ENCODE measurements at regions of chr13 and their contacts with region 1.

Region 1: DNA sequence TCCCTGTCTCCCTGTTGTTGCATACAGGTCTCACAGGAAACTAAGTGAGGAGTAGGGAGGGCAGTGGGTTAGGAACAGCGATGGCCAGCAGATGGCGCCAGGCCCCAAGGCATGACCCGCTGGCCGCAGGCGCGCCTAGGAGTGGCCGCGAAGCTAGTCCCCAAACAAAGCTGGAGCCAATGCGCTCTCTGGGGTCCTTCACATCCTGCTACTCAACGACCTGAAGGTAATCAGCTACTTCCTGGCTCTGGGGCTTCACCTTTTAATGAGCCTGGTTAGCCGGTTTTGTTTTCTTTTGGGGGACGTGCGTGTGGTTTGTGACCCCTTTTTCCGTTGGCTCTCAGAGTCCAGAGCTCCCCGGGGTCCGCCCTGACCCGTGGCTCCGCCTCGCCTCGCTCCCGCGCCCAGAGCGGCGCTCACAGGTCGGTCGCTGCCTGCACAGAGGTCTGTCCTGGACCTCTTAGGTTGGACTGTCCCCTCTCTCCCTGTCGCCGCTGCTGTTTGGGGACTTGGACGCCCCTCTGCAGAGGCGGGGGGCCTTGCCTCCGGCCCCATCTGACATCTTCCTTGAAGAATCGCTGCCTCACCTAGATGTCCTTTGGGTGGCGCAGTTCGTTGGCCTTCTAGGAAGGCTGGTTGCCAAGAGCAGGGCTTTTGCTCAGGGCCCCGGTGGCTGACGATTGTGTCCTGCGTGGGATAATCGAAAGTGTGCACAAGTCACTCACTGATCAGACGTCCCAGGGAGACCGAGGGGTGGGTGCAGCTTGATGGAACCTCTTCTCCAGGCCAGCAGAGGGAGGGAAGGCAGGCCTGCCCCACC is 62.1 kb upstream of the GTF3A start:
- DNase-seq: no peak
- ATAC-seq: peak; percentile 98
- H3K4me3 ChIP-seq: peak overlapping the region; percentile 29
- H3K27ac ChIP-seq: no peak overlapping the region
- H3K4me1 ChIP-seq: no peaks in the 10 kb centered on the region
- H3K27me3 ChIP-seq: peaks cover 3 to 4% of the 10 kb centered on the region in 2 experiments; a peak in 1 of 4 replicates
- CTCF ChIP-seq: peak; percentile 93 to 96 (median 95)
- EP300 ChIP-seq: no peak
- POLR2A ChIP-seq: no peak
- RAD21 ChIP-seq: peak; percentile 83

Region 2: DNA sequence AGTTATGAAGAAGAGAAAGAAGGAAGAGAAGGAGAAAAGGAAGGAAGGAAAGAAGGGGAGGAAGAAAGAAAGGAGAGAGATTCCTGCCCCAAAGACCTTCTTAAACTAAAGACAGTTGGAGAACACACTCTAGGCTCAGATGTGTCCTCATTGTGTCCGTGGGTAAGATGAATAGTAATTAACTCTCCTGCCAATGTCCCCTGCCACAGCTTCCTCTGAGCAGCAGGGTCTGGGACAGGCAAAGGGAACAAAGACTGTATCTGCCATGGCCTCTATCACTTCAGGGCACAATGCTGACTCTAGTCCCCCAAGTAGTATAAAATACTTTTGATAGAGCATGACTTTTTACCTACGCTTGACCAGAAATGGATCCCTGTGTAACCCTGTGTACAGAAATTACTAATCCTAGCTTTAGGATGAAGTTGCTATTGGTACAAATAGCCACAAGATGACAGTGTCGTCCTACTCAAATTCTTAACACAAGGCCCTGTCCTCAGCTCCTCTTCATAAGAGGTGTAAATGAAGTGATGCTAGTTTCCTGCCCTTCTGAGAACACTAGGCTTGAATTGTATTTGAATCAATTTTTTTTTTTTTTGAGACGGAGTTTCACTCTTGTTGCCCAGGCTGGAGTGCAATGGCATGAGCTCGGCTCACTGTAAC is 415.5 kb before region 1 on chr13:
- CTCF ChIA-PET with region 1: interaction called, 51 read pairs
- POLR2A ChIA-PET with region 1: no interaction called
- RAD21 ChIA-PET with region 1: interaction called, 42 read pairs
- SMC1A ChIA-PET with region 1: interaction called, 21 read pairs
- in situ Hi-C with region 1: no loop called
- intact Hi-C with region 1: loop called (anchors 1 kb)
- DNase-seq: peak; percentile 16
- ATAC-seq: peak; percentile 95
- H3K4me3 ChIP-seq: no peak overlapping the region
- H3K27ac ChIP-seq: no peak overlapping the region
- H3K4me1 ChIP-seq: no peaks in the 10 kb centered on the region
- H3K27me3 ChIP-seq: peaks cover 0 to 1% of the 10 kb centered on the region in 2 experiments; a peak in 1 of 4 replicates
- CTCF ChIP-seq: peak; percentile 68 to 86 (median 71)
- EP300 ChIP-seq: no peak
- POLR2A ChIP-seq: no peak
- RAD21 ChIP-seq: peak; percentile 82

Region 3: GRCh38 chr13:27171827-27172494 is 190.3 kb before region 1 on chr13:
- CTCF ChIA-PET with region 1: no interaction called
- POLR2A ChIA-PET with region 1: no interaction called
- RAD21 ChIA-PET with region 1: no interaction called
- SMC1A ChIA-PET with region 1: interaction called, 4 read pairs
- in situ Hi-C with region 1: no loop called
- intact Hi-C with region 1: loop called (anchors 10 kb)
- DNase-seq: no peak
- ATAC-seq: peak; percentile 87
- H3K4me3 ChIP-seq: peak overlapping the region; percentile 59
- H3K27ac ChIP-seq: peak overlapping the region; percentile 74
- H3K4me1 ChIP-seq: peaks cover 11% of the 10 kb centered on the region
- H3K27me3 ChIP-seq: no peaks in the 10 kb centered on the region
- CTCF ChIP-seq: peak in 2 of 3 experiments; percentile 7 to 19; a peak in 1 of 6 replicates
- EP300 ChIP-seq: peak in 1 of 2 experiments; percentile 26; a peak in 1 of 4 replicates
- POLR2A ChIP-seq: peak; percentile 7; the same call in 1 of the 2 replicates
- RAD21 ChIP-seq: peak; percentile 23; the same call in 1 of the 2 replicates

Region 4: DNA sequence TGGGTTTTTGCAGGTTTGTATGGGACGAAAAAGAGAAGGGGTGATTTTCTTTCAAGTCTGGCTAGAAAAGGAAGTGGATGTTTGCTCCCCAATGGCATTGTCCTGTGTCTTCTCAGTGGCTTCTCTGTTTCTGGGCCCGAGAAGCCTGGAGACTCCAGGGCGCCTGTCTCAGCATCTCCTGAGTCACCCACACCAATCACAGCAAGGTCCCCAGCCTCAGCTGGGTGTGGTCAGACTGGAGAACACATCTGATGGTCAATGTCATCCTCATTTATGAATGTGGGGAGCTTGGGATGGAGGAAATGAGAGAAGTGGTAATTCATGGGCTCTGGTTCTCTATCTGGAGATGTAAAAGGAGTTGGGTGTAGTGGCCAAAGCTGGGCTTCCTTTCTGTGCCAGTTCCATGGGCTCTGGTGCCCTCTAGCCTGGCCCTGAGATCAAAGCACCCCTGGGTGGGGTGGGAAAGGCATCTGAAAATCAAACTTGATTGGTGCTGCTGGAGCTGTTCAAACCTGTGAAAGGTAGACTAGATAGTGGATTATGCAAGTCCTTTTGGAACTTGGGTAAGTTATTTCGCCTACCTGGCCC is 78.3 kb before region 1 on chr13:
- CTCF ChIA-PET with region 1: interaction called, 6 read pairs
- POLR2A ChIA-PET with region 1: no interaction called
- RAD21 ChIA-PET with region 1: interaction called, 4 read pairs
- SMC1A ChIA-PET with region 1: no interaction called
- in situ Hi-C with region 1: no loop called
- intact Hi-C with region 1: loop called (anchors 2 kb)
- DNase-seq: no peak
- ATAC-seq: peak; percentile 92
- H3K4me3 ChIP-seq: no peak overlapping the region
- H3K27ac ChIP-seq: no peak overlapping the region
- H3K4me1 ChIP-seq: no peaks in the 10 kb centered on the region
- H3K27me3 ChIP-seq: no peaks in the 10 kb centered on the region; a peak in 1 of 4 replicates
- CTCF ChIP-seq: peak; percentile 45 to 62 (median 57); a peak in 5 of 6 replicates
- EP300 ChIP-seq: no peak
- POLR2A ChIP-seq: no peak
- RAD21 ChIP-seq: peak; percentile 68

Region 5: GRCh38 chr13:27339299-27339698 is 23.0 kb before region 1 on chr13:
- CTCF ChIA-PET with region 1: interaction called, 21 read pairs
- POLR2A ChIA-PET with region 1: no interaction called
- RAD21 ChIA-PET with region 1: interaction called, 5 read pairs
- SMC1A ChIA-PET with region 1: interaction called, 4 read pairs
- in situ Hi-C with region 1: no loop called
- intact Hi-C with region 1: loop called (anchors 1 kb)
- DNase-seq: no peak
- ATAC-seq: peak; percentile 96
- H3K4me3 ChIP-seq: no peak overlapping the region
- H3K27ac ChIP-seq: no peak overlapping the region
- H3K4me1 ChIP-seq: no peaks in the 10 kb centered on the region
- H3K27me3 ChIP-seq: peaks cover 0 to 6% of the 10 kb centered on the region in 2 experiments; a peak in 2 of 4 replicates
- CTCF ChIP-seq: peak; percentile 59 to 76 (median 67)
- EP300 ChIP-seq: no peak
- POLR2A ChIP-seq: no peak
- RAD21 ChIP-seq: peak; percentile 41; the same call in 1 of the 2 replicates

Region 6: DNA sequence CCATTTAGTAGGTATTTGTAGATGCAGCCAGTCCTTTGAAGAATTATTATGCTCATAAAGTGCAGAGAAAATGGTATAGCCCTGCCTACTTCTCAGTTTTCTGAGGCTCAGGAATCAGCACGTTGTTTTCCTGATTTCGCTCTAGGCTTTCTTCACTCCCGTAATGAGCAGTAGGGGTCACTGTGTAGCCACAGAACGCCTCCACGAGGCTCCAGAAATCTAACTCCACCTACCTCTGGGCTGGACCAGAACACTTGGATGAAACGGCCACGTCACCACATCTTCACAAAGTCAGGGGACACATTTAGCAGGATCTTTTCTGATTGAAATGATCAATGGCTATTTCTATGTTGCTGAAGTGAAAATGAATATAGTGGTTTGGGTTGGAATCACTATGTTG is 12.4 kb after region 1 on chr13:
- CTCF ChIA-PET with region 1: interaction called, 32 read pairs
- POLR2A ChIA-PET with region 1: interaction called, 3 read pairs
- RAD21 ChIA-PET with region 1: interaction called, 7 read pairs
- SMC1A ChIA-PET with region 1: interaction called, 4 read pairs
- in situ Hi-C with region 1: no loop called
- intact Hi-C with region 1: no loop called
- DNase-seq: no peak
- ATAC-seq: peak; percentile 96
- H3K4me3 ChIP-seq: no peak overlapping the region
- H3K27ac ChIP-seq: no peak overlapping the region
- H3K4me1 ChIP-seq: no peaks in the 10 kb centered on the region
- H3K27me3 ChIP-seq: no peaks in the 10 kb centered on the region
- CTCF ChIP-seq: peak; percentile 68 to 86 (median 80)
- EP300 ChIP-seq: no peak
- POLR2A ChIP-seq: no peak
- RAD21 ChIP-seq: peak; percentile 84

Region 7: DNA sequence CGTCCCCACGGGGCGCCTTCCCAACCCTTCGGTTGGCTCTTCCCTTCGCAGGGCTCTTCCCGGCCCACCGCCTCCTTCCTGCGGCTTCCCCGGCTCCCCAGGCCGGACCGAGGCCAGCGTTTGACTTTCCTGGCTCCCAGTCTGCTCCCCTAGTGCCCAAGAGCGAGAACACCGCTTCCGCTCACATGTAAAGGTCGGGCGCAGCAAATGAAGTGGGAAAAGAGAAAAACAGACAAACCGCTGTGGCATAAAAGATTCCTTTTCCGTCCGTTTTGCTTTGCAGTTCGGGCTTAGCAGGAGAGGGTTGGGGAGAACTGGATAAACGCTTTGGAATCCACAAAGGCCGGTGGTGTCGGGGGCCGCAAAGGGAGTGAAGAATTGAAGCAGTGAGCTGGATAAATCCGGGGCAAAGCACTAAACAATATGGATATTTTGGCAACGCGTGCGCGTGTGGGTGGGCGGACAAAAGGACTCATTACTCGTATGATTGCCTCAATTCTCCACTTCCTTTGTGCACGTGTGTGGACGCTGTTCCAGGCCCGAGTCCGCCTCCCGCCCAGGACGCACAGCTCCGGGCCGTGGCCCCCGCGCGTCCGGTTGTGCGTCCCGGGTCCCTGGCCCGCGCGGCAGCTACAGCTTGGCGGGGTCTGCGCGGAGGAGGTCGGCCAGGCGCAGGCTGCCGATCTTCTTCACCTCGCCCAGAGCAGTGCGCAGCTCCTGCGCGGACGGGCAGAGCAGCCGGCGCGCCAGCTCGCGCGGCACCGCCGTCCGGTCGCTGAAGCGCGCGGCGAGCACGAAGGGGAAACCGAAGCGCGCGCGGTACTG is 615.4 kb after region 1 on chr13:
- CTCF ChIA-PET with region 1: interaction called, 27 read pairs
- POLR2A ChIA-PET with region 1: no interaction called
- RAD21 ChIA-PET with region 1: interaction called, 19 read pairs
- SMC1A ChIA-PET with region 1: interaction called, 15 read pairs
- in situ Hi-C with region 1: no loop called
- intact Hi-C with region 1: no loop called
- DNase-seq: no peak
- ATAC-seq: no peak
- H3K4me3 ChIP-seq: no peak overlapping the region
- H3K27ac ChIP-seq: no peak overlapping the region
- H3K4me1 ChIP-seq: no peaks in the 10 kb centered on the region
- H3K27me3 ChIP-seq: peaks cover 27 to 45% of the 10 kb centered on the region in 2 experiments
- CTCF ChIP-seq: no peak
- EP300 ChIP-seq: no peak
- POLR2A ChIP-seq: no peak
- RAD21 ChIP-seq: no peak

Region 8: GRCh38 chr13:28324181-28324789 is 962.0 kb after region 1 on chr13:
- CTCF ChIA-PET with region 1: no interaction called
- POLR2A ChIA-PET with region 1: no interaction called
- RAD21 ChIA-PET with region 1: no interaction called
- SMC1A ChIA-PET with region 1: no interaction called
- in situ Hi-C with region 1: no loop called
- intact Hi-C with region 1: no loop called
- DNase-seq: peak; percentile 45
- ATAC-seq: peak; percentile 96
- H3K4me3 ChIP-seq: no peak overlapping the region
- H3K27ac ChIP-seq: no peak overlapping the region
- H3K4me1 ChIP-seq: no peaks in the 10 kb centered on the region
- H3K27me3 ChIP-seq: no peaks in the 10 kb centered on the region
- CTCF ChIP-seq: peak; percentile 77 to 91 (median 85)
- EP300 ChIP-seq: no peak
- POLR2A ChIP-seq: no peak
- RAD21 ChIP-seq: peak; percentile 97

Measured in GM12878 (cell line).